ENCODE measurements at regions of chr10 and their contacts with region 1.

Region 1: DNA sequence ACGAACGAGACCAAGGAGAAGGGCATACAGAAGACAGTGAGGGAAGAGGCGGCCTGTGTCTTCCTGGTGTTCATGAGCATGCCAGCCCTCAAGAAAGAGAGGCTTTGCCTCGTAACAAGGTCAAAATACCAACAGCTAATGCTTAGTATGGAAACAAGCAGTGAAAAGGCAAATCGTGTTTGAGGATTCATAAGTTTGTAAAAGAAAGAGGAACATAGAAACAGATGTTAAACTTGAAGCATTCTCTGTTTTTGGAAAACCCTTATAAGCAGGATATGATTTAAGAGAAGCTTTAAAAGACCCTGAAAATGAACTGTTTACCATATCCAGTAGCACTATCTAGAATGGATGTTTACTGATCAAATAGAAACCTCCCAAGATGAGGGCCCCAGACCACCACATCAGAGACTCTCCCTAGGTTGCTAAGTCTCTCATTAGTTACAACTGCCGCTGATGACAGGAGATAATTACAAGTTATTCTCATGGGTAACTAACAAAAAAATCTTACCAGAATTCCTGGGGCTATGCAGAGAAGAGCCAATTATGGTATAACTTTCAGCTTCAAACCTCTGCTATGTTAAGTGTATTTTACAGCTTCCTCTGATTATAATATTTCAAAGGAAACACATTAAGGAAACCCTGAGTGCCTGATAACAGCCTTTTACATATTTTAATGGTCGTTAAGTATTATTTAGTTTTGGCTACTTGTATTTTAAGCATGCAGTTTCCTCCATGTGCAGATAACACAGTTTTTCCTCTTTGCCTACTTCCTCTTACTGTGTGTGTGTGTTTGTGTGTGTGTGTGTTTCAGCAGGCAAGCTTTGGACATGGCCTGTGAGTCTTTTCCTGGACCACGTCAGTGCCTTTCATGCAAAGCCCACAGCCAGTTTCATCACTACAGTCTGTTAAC is 17.9 kb downstream of the JCAD start:
- DNase-seq: no peak
- H3K4me3 ChIP-seq: no peak overlapping the region
- H3K27ac ChIP-seq: no peak overlapping the region
- H3K4me1 ChIP-seq: no peaks in the 10 kb centered on the region
- H3K27me3 ChIP-seq: no peaks in the 10 kb centered on the region
- CTCF ChIP-seq: no peak

Region 2: GRCh38 chr10:29895456-29895855 is 146.0 kb before region 1 on chr10:
- CTCF ChIA-PET with region 1: no interaction called
- POLR2A ChIA-PET with region 1: interaction called, 10 read pairs
- intact Hi-C with region 1: no loop called
- DNase-seq: no peak
- H3K4me3 ChIP-seq: no peak overlapping the region
- H3K27ac ChIP-seq: no peak overlapping the region
- H3K4me1 ChIP-seq: no peaks in the 10 kb centered on the region
- H3K27me3 ChIP-seq: no peaks in the 10 kb centered on the region
- CTCF ChIP-seq: no peak